ENCODE measurements at regions of chr1 and their contacts with region 1.

Region 1: DNA sequence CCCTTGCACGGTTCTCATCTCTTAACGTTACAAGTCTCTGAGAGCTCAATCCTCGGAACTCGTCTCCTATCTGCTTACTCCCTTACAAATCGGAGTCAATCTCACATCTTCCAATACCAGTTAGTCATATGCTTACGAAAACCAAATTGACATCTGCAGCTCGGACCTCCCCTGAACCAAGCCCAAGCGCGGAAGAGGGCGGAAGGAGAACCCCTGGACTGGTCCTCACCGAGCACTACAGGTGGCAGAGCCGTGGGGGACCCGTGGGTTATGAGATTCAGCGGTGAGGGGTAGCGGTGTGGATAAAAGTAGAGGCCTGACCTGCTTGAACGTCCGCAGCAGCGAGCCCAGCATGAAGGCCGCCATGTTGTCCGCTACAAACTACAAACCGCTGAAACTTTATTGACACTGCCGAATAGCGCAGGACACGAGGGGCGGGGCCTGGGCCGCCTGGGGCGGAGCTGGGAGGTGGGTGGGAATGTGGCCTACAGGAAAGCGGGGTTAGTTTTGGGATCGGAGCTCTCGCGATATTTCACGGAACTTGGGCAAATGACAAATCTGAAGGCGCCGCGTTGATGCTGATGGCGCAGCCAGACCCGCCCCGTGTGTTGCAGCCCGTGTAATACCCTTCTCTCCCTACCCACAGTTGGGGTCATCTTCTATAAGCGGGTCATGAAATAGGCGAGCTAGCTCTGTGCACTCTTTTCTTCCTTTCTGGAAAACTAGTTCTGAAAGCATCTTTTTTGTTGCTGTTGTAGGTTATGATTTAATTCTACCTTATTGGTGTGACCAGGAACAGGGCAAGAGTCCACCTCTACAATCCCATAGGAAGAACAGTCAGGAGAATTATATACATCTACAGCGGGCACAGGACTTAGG is at the start of gene MRPS14:
- DNase-seq: peak; percentile 96 to 99 (median 98)
- ATAC-seq: peak; percentile 91
- H3K4me3 ChIP-seq: peak within 1 kb of the TSS; percentile 72 to 96
- H3K4me3 Mint-ChIP-seq: peak within 1 kb of the TSS; percentile 91
- H3K27ac ChIP-seq: peak within 1 kb of the TSS; percentile 83 to 93
- H3K27ac Mint-ChIP-seq: peak within 1 kb of the TSS; percentile 94
- H3K4me1 ChIP-seq: peaks cover 6% of the 10 kb centered on the region
- H3K4me1 Mint-ChIP-seq: peaks cover 32% of the 10 kb centered on the region
- H3K27me3 ChIP-seq: no peaks in the 10 kb centered on the region
- H3K27me3 Mint-ChIP-seq: no peaks in the 10 kb centered on the region
- CTCF ChIP-seq: no peak
- total RNA-seq, gene MRPS14: 6.8 to 7.3 TPM

Region 2: GRCh38 chr1:173714759-173715537 is 1308.3 kb before region 1 on chr1 and contains the start of gene KLHL20:
- CTCF ChIA-PET with region 1: no interaction called
- POLR2A ChIA-PET with region 1: no interaction called
- intact Hi-C with region 1: loop called (anchors 10 kb)
- DNase-seq: peak; percentile 72 to 94 (median 83)
- ATAC-seq: peak; percentile 98
- H3K4me3 ChIP-seq: peak within 1 kb of the TSS; percentile 80 to 86
- H3K4me3 Mint-ChIP-seq: peak within 1 kb of the TSS; percentile 96
- H3K27ac ChIP-seq: peak within 1 kb of the TSS; percentile 76 to 87
- H3K27ac Mint-ChIP-seq: peak within 1 kb of the TSS; percentile 97
- H3K4me1 ChIP-seq: peaks cover 24% of the 10 kb centered on the region
- H3K4me1 Mint-ChIP-seq: peaks cover 38% of the 10 kb centered on the region
- H3K27me3 ChIP-seq: peaks cover 0 to 2% of the 10 kb centered on the region in 2 experiments
- H3K27me3 Mint-ChIP-seq: peaks cover 7% of the 10 kb centered on the region
- CTCF ChIP-seq: no peak
- total RNA-seq, gene KLHL20: 27.9 to 29.0 TPM

Region 3: DNA sequence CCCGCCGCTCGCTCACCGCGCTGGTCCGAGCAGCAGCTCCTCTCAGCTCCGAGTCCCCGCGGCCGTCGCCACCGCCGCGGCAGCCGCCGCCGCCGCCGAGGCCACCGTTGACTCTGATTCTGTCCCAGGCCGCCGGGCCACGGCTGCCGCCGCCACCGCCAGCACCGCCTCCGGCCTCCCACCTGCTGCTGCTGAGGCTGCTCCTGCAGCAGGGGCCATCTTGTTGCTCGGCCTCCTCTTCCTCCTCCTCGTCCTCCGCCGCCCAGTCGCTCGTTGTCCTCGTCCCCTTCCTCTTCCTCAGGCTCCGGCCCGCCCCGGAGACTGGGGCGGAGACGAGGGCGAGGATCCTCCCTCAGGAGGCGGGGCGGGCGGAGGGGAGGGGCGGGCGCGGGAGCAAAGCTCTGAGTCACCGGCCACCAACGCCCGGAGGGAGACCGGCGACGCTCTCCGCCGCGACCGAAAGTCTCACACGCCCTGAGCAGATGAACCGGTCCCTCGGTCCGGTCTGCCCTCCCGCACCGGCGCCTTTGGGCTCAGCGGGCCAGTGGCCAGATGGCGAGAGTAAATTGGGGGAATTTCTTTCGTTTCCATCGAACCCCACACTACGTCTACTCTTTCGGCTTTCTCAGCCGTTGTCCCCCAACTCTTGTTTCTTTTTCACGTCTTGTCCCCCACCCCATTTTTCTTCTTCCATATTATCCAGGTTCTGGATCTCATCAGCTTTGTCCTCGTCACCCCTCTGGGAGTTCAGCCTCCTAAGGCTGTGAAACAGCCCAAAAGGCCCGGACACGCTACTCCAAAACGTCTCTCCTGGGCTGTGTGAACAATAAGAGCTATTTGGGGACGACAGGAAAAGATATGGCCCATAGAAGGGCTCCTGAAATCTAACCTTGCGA is 1001.0 kb before region 1 on chr1 and contains the start of gene RC3H1:
- CTCF ChIA-PET with region 1: no interaction called
- POLR2A ChIA-PET with region 1: no interaction called
- intact Hi-C with region 1: loop called (anchors 5 kb)
- DNase-seq: peak; percentile 79 to 93 (median 89)
- ATAC-seq: peak; percentile 95
- H3K4me3 ChIP-seq: peak within 1 kb of the TSS; percentile 83 to 94
- H3K4me3 Mint-ChIP-seq: peak within 1 kb of the TSS; percentile 95
- H3K27ac ChIP-seq: peak within 1 kb of the TSS; percentile 84 to 93
- H3K27ac Mint-ChIP-seq: peak within 1 kb of the TSS; percentile 98
- H3K4me1 ChIP-seq: peaks cover 30% of the 10 kb centered on the region
- H3K4me1 Mint-ChIP-seq: peaks cover 45% of the 10 kb centered on the region
- H3K27me3 ChIP-seq: no peaks in the 10 kb centered on the region
- H3K27me3 Mint-ChIP-seq: no peaks in the 10 kb centered on the region
- CTCF ChIP-seq: no peak
- total RNA-seq, gene RC3H1: 40.2 to 41.4 TPM

Region 4: DNA sequence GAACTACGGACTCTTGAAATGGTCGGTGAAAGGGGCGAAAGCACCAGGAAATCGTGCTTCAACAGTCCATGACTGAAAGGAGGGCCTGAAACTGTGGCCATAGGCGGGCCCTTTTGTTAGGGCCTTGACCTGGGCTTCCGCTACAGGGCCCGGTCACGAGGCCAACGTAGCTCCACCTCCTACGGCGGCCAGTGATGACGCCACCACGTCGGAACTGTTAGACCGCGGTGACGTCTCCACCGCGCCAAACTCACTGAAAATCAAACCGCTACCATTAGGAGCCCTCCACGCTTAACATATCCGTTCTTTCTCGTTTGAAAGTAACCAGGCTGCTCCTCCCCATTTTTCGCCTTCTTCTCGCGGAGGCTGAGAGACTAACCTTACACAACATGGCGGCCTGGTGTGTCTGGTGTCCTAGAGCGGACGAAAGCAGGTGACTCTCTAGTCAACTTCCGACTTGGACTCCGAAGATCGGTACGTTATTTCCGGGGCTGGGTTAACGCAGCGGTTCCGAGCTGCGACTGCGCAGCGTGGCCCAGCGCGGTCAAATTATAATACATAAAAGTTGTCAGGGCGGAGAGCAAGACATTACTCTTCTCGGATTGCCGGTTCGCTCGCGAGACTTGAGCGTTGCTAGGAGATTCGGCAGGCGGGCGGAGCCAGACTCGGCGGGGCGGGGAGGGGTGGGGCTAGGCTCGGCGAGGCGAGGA is 23.9 kb before region 1 on chr1:
- CTCF ChIA-PET with region 1: interaction called, 19 read pairs
- POLR2A ChIA-PET with region 1: interaction called, 148 read pairs
- intact Hi-C with region 1: loop called (anchors 1 kb)
- DNase-seq: peak; percentile 95 to 99 (median 96)
- ATAC-seq: peak; percentile 76
- H3K4me3 ChIP-seq: peak overlapping the region; percentile 74 to 80
- H3K4me3 Mint-ChIP-seq: no peak overlapping the region
- H3K27ac ChIP-seq: peak overlapping the region; percentile 99 to 100
- H3K27ac Mint-ChIP-seq: no peak overlapping the region
- H3K4me1 ChIP-seq: peaks cover 31% of the 10 kb centered on the region
- H3K4me1 Mint-ChIP-seq: peaks cover 46% of the 10 kb centered on the region
- H3K27me3 ChIP-seq: no peaks in the 10 kb centered on the region
- H3K27me3 Mint-ChIP-seq: no peaks in the 10 kb centered on the region
- CTCF ChIP-seq: no peak

Region 5: GRCh38 chr1:175146529-175147213 is 123.4 kb after region 1 on chr1:
- CTCF ChIA-PET with region 1: interaction called, 13 read pairs
- POLR2A ChIA-PET with region 1: no interaction called
- intact Hi-C with region 1: loop called in 1 of 2 experiments (anchors 5 kb)
- DNase-seq: peak; percentile 48 to 75 (median 67)
- ATAC-seq: peak; percentile 87
- H3K4me3 ChIP-seq: no peak overlapping the region
- H3K4me3 Mint-ChIP-seq: no peak overlapping the region
- H3K27ac ChIP-seq: no peak overlapping the region
- H3K27ac Mint-ChIP-seq: no peak overlapping the region
- H3K4me1 ChIP-seq: peaks cover 2% of the 10 kb centered on the region
- H3K4me1 Mint-ChIP-seq: peaks cover 3% of the 10 kb centered on the region
- H3K27me3 ChIP-seq: peaks cover 0 to under 1% of the 10 kb centered on the region in 2 experiments
- H3K27me3 Mint-ChIP-seq: peaks cover 28% of the 10 kb centered on the region
- CTCF ChIP-seq: peak; percentile 88